Gastrocnemius medialis (tissue), 4 donors: ENCODE measurements at regions of chr2 and their contacts with region 1.

Region 1: GRCh38 chr2:41782306-41783158 is 265.3 kb upstream of the PKDCC start:
- DNase-seq: no peak
- ATAC-seq: peak in 1 of 2 donors; percentile 51
- H3K4me3 ChIP-seq: no peak overlapping the region
- H3K27ac ChIP-seq: no peak overlapping the region
- H3K4me1 ChIP-seq: no peaks in the 10 kb centered on the region
- H3K27me3 ChIP-seq: no peaks in the 10 kb centered on the region
- CTCF ChIP-seq: peak; percentile 56 to 85 (median 72)
- POLR2A ChIP-seq: no peak

Region 2: DNA sequence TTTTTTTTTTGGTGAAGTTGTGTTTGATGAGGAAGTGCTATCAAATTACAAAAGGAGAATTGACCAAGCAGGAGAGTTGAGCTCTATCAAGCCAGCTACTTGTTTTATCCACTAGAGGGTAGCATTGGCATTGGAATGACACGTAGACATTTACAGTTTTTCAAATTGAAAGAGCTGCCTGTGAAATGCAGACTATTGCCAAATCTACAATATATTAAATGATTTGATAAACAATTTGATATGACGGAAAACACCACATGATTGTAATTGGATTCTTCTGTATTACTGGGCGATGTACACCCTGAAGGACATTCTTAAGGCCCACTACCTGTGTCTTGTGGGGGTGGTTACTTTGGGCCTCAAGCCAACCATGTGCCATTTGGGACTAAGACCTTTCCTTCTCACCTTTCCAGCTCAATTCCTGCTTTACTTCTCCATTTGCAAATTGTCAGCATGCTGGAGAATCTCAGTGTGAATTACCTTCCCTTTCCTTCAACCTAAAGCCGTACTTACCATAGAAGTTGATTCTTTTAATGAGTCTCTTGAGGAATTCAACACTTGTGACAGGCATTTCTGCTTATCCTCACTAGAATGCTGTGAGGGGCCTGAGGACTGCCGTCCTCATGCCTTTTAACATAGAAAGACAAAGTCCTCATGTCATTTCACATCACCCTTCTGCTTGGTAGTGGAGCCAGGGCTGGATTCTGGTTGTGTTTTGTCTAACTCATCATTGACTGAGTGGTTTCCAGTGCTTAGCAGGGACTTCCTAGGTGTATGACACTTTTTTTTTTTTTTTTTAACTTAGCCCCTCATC is 1868.7 kb before region 1 on chr2:
- in situ Hi-C with region 1: loop called (anchors 10 to 25 kb)
- intact Hi-C with region 1: loop called (anchors 2 kb)
- DNase-seq: no peak
- ATAC-seq: peak; percentile 58 to 75
- H3K4me3 ChIP-seq: no peak overlapping the region
- H3K27ac ChIP-seq: no peak overlapping the region
- H3K4me1 ChIP-seq: no peaks in the 10 kb centered on the region
- H3K27me3 ChIP-seq: no peaks in the 10 kb centered on the region
- CTCF ChIP-seq: peak; percentile 39 to 77 (median 59)
- POLR2A ChIP-seq: no peak

Region 3: DNA sequence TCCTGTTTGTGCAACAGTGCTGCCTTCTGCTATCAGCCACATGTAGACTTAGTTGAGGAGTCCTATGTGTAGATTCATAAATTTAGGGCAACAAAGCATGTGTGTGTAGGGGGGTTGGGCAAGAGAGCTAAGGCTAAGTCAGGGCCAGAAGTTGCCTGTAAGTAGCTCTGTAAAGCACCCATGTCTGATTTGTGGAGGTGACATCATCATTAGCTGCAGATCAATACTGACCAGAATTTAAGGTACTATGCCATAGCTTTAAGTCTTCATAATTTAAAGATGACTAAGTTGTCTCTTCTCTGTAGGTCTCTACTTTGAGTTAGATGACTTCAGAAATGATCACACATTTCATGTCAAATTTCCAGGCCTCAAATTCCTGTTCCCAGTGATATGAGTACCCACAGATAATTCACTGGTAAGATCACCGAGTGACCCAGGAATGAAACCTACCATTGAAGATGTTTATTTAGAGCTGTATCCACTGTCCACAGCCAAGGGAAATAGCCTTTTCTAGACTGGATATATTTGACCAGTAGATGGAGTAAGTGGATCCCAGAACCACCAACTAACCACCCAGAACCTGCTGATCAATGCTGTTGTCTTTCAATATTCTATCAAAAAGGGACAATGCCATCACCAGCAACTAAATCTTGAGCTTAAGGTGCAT is 1569.6 kb before region 1 on chr2:
- in situ Hi-C with region 1: no loop called
- intact Hi-C with region 1: loop called (anchors 10 kb)
- DNase-seq: no peak
- ATAC-seq: no peak
- H3K4me3 ChIP-seq: no peak overlapping the region
- H3K27ac ChIP-seq: no peak overlapping the region
- H3K4me1 ChIP-seq: no peaks in the 10 kb centered on the region
- H3K27me3 ChIP-seq: no peaks in the 10 kb centered on the region
- CTCF ChIP-seq: peak in 4 of 5 experiments; percentile 15 to 40 (median 28)
- POLR2A ChIP-seq: no peak

Region 4: DNA sequence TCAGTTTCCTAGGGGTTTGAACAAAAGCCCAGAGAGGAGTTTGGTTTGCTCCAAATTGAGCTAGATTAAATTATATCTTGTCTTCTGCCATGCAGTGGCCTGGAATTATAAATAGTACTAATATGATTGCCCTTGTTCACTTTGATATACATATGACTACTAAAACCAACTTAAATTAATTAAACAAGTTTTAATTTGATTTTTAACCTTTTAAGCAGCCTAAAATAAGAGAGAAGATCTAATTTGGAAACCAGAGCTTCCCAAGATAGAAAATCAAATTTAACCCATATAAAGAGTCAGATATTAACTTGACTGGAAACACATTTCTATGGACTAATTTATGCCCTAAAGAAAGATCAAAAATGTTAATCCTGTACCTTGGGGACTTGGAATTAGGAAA is 886.2 kb before region 1 on chr2:
- in situ Hi-C with region 1: no loop called
- intact Hi-C with region 1: no loop called
- DNase-seq: no peak
- ATAC-seq: no peak
- H3K4me3 ChIP-seq: no peak overlapping the region
- H3K27ac ChIP-seq: no peak overlapping the region
- H3K4me1 ChIP-seq: no peaks in the 10 kb centered on the region
- H3K27me3 ChIP-seq: no peaks in the 10 kb centered on the region
- CTCF ChIP-seq: no peak
- POLR2A ChIP-seq: no peak